ENCODE measurements at regions of chr17 and their contacts with region 1.

Region 1: GRCh38 chr17:82267575-82268379 is 5.7 kb downstream of the CSNK1D start:
- DNase-seq: peak; percentile 99
- ATAC-seq: peak; percentile 88
- H3K4me3 ChIP-seq: peak overlapping the region; percentile 12 to 65 (median 48); a peak in 5 of 6 replicates
- H3K27ac ChIP-seq: peak overlapping the region; percentile 90
- H3K4me1 ChIP-seq: peaks cover 70% of the 10 kb centered on the region
- H3K27me3 ChIP-seq: no peaks in the 10 kb centered on the region; a peak in 1 of 5 replicates
- CTCF ChIP-seq: peak; percentile 46
- EP300 ChIP-seq: peak; percentile 84 to 90
- POLR2A ChIP-seq: peak in 1 of 2 experiments; percentile 44; a peak in 3 of 4 replicates
- RAD21 ChIP-seq: peak; percentile 44

Region 2: GRCh38 chr17:82120148-82120547 is 147.6 kb before region 1 on chr17:
- CTCF ChIA-PET with region 1: no interaction called
- POLR2A ChIA-PET with region 1: no interaction called
- in situ Hi-C with region 1: no loop called
- intact Hi-C with region 1: no loop called
- DNase-seq: no peak
- ATAC-seq: no peak
- H3K4me3 ChIP-seq: no peak overlapping the region
- H3K27ac ChIP-seq: no peak overlapping the region
- H3K4me1 ChIP-seq: peaks cover 52% of the 10 kb centered on the region
- H3K27me3 ChIP-seq: no peaks in the 10 kb centered on the region
- CTCF ChIP-seq: no peak
- EP300 ChIP-seq: no peak
- POLR2A ChIP-seq: no peak
- RAD21 ChIP-seq: no peak

Region 3: DNA sequence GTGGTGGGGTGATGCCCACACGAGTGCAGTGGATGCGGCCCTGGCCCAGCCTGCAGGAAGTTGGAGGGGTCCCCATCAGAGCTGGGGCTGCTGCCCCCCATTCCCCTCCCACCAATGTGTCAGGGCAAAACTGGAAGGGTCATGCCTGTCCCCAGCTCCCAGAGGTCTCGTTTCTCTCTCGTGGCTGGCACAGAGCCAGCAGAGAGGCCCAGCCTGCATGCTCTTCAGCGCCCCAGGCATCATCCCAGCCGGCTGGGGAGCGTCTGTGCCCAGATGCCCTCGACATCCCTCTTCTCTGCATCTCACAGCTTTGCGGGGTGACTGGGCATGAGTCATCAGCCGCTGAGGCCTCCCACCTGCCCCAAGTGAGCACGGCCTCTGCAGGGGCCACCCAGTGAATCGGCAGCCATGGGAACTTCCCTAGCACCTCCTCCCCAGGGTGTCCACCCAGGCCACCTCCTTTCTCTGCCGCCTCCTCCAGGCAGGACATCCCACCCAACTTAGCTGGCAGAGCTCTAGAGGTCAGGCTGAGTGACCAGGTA is 15.5 kb after region 1 on chr17:
- CTCF ChIA-PET with region 1: no interaction called
- POLR2A ChIA-PET with region 1: interaction called, 38 read pairs
- in situ Hi-C with region 1: no loop called
- intact Hi-C with region 1: no loop called
- DNase-seq: no peak
- ATAC-seq: peak; percentile 33
- H3K4me3 ChIP-seq: peak overlapping the region in 1 of 3 experiments; percentile 47; a peak in 1 of 6 replicates
- H3K27ac ChIP-seq: no peak overlapping the region
- H3K4me1 ChIP-seq: peaks cover 66% of the 10 kb centered on the region
- H3K27me3 ChIP-seq: peaks cover 2 to 14% of the 10 kb centered on the region in 2 experiments; a peak in 4 of 5 replicates
- CTCF ChIP-seq: no peak
- EP300 ChIP-seq: no peak
- POLR2A ChIP-seq: no peak
- RAD21 ChIP-seq: no peak

Measured in HepG2 (cell line).